ENCODE measurements at regions of chr17 and their contacts with region 1.

Region 1: DNA sequence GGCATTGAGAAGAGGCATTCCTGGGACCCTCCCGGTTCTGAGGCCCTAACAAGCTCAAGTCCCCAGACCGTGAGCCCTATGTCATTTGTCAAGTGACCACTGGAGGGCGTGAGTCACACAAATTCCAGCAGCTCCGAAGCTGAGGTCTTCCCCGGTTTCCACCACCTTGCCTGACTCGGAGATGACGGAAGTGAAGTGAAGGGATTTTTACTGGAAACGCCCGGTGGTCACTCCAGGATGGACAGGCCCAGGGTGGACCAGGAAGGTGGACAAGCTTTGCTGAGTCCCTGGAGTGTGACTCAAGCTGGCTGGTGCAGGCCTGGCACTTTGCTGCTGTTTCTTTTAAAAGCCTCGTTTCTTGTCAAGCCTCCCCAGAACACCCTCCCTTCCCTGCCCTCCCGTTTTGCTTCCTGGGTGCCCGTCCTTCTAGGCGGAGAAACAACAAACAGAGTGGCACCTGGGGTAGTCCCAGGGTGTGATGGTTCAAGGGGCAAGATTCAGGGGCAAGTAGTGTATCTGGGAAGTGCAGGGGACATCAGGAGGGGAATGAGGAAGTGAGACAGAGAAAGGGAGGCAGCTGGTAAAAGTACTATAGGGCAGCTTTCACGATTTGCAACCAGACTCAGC is 5.3 kb upstream of the NOS2 start:
- DNase-seq: peak; percentile 83 to 91 (median 86)
- ATAC-seq: peak; percentile 80
- H3K4me3 ChIP-seq: no peak overlapping the region
- H3K4me1 ChIP-seq: peaks cover 18% of the 10 kb centered on the region
- CTCF ChIP-seq: peak; percentile 70

Region 2: DNA sequence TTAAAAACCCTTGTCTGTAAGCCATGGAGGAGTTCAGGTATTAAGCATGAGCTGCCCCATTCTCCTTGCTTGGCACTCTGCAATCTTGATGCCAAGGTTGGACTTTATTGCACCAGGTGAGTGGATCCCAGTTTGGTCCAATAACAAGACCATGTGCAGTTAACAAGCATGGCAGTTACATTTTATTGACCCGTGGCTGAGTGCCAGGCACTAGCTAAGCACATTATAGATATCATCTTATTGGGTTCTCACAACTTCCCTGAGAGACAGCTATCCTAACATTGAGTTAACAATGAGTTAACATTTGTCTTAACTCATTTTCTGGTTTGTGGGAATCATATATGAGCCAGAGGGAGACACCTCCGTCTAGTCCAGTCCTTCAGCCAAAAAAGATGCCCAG is 65.8 kb after region 1 on chr17:
- intact Hi-C with region 1: loop called (anchors 2 to 10 kb)
- DNase-seq: peak; percentile 60 to 92 (median 76)
- ATAC-seq: peak; percentile 96
- H3K4me3 ChIP-seq: no peak overlapping the region
- H3K4me1 ChIP-seq: peaks cover 4% of the 10 kb centered on the region
- CTCF ChIP-seq: no peak

Region 3: DNA sequence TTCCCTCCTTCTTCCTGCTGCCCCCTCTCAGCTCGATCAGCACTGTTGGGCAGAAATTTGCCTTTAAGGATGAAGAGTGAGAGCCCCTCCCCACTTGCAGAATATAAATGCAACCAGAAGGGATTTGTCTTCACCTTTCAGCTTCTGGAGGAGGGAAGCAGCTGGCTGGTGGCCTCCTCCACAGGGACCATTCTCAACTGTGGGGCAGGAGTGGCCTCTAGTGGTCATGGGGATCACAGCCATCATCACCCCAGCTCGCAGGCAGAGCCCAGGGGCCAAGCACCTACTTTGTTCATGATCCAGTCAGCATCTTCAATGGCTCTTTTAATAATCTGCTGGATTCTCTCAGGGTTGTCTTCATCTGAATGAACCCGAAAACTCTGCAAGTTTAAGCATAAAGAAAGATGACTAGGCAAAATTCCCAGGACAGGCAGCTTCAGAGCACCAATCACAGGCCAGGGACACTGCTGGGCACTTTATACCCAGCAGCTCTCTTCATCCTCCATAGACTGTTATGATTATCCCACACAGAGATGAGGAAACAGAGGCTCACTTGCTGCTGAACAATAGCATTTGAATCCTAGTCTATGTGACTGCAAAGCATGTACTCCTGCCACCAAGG is 74.5 kb after region 1 on chr17:
- intact Hi-C with region 1: loop called in 1 of 2 experiments (anchors 10 kb)
- DNase-seq: peak; percentile 66 to 87 (median 86)
- ATAC-seq: peak; percentile 95
- H3K4me3 ChIP-seq: no peak overlapping the region
- H3K4me1 ChIP-seq: no peaks in the 10 kb centered on the region
- CTCF ChIP-seq: peak; percentile 63

Region 4: GRCh38 chr17:29140051-29140621 is 1334.5 kb after region 1 on chr17:
- intact Hi-C with region 1: no loop called
- DNase-seq: peak; percentile 88 to 92 (median 89)
- ATAC-seq: peak; percentile 85
- H3K4me3 ChIP-seq: no peak overlapping the region
- H3K4me1 ChIP-seq: peaks cover 20% of the 10 kb centered on the region
- CTCF ChIP-seq: no peak